ENCODE measurements at regions of chr2 and their contacts with region 1.

Region 1: DNA sequence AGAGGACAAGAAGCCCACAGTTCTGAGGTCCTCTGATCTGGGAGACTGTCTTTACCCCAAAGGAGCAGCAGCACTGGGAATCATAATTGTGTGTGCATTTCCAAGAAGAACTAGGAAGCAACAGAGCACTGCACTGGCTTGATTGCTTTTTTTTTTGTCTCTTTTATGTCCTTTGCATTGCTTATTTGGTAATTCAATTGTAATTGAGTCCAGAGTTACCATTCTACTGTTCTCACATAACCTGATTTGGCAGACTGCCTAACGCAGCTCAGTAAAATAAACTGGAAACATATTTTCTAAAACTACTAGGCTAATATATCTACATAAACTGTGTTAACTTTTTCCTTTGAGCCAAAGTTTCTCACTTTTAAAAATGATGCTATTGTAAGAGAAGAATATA is 190.3 kb upstream of the SLC8A1 start:
- DNase-seq: no peak
- ATAC-seq: no peak
- H3K4me3 ChIP-seq: no peak overlapping the region
- H3K4me3 Mint-ChIP-seq: no peak overlapping the region
- H3K27ac ChIP-seq: no peak overlapping the region
- H3K27ac Mint-ChIP-seq: no peak overlapping the region
- H3K4me1 ChIP-seq: no peaks in the 10 kb centered on the region
- H3K4me1 Mint-ChIP-seq: no peaks in the 10 kb centered on the region
- H3K27me3 ChIP-seq: no peaks in the 10 kb centered on the region
- H3K27me3 Mint-ChIP-seq: no peaks in the 10 kb centered on the region
- CTCF ChIP-seq: no peak

Region 2: DNA sequence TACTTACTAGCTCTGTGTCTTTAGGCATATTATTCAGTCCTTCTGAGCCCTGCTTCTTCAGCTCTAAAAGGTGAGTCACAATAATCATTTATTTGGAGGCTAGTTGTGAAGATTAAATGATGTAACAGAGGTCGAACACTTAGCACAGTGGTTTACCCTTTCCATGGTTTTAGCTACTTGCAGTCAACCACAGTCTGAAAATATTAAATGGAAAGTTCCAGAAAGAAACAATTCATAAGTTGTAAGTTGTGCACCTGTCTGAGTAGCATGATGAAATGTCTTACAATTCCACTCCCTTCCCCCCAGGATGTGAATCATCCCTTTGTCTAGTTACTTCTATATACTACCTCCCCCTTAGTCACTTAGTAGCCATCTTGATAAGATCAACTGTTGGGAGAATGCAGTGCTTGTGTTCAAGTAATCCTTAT is 645.6 kb before region 1 on chr2:
- CTCF ChIA-PET with region 1: no interaction called
- POLR2A ChIA-PET with region 1: no interaction called
- intact Hi-C with region 1: no loop called
- DNase-seq: no peak
- ATAC-seq: no peak
- H3K4me3 ChIP-seq: no peak overlapping the region
- H3K4me3 Mint-ChIP-seq: no peak overlapping the region
- H3K27ac ChIP-seq: no peak overlapping the region
- H3K27ac Mint-ChIP-seq: no peak overlapping the region
- H3K4me1 ChIP-seq: no peaks in the 10 kb centered on the region
- H3K4me1 Mint-ChIP-seq: no peaks in the 10 kb centered on the region
- H3K27me3 ChIP-seq: no peaks in the 10 kb centered on the region
- H3K27me3 Mint-ChIP-seq: no peaks in the 10 kb centered on the region
- CTCF ChIP-seq: no peak

Region 3: GRCh38 chr2:40721595-40721994 is 79.4 kb after region 1 on chr2:
- CTCF ChIA-PET with region 1: no interaction called
- POLR2A ChIA-PET with region 1: no interaction called
- intact Hi-C with region 1: loop called in 1 of 2 experiments (anchors 1 kb)
- DNase-seq: no peak
- ATAC-seq: no peak
- H3K4me3 ChIP-seq: no peak overlapping the region
- H3K4me3 Mint-ChIP-seq: no peak overlapping the region
- H3K27ac ChIP-seq: no peak overlapping the region
- H3K27ac Mint-ChIP-seq: no peak overlapping the region
- H3K4me1 ChIP-seq: no peaks in the 10 kb centered on the region
- H3K4me1 Mint-ChIP-seq: no peaks in the 10 kb centered on the region
- H3K27me3 ChIP-seq: no peaks in the 10 kb centered on the region
- H3K27me3 Mint-ChIP-seq: no peaks in the 10 kb centered on the region
- CTCF ChIP-seq: no peak

Measured in CD4-positive, alpha-beta T cell (primary cell).